Caco-2 (cell line): ENCODE measurements at regions of chr7 and their contacts with region 1.

Region 1: GRCh38 chr7:82234457-82235049 is 209.0 kb downstream of the CACNA2D1 start:
- DNase-seq: peak in 1 of 2 experiments; percentile 32
- H3K4me3 ChIP-seq: no peak overlapping the region
- H3K4me3 Mint-ChIP-seq: no peak overlapping the region
- H3K27ac Mint-ChIP-seq: no peak overlapping the region
- H3K4me1 ChIP-seq: no peaks in the 10 kb centered on the region
- H3K4me1 Mint-ChIP-seq: no peaks in the 10 kb centered on the region
- H3K27me3 ChIP-seq: no peaks in the 10 kb centered on the region
- H3K27me3 Mint-ChIP-seq: peaks cover 11% of the 10 kb centered on the region
- CTCF ChIP-seq: peak; percentile 60 to 61

Region 2: GRCh38 chr7:82044497-82045080 is 190.0 kb before region 1 on chr7:
- CTCF ChIA-PET with region 1: no interaction called
- POLR2A ChIA-PET with region 1: no interaction called
- intact Hi-C with region 1: loop called (anchors 5 kb)
- DNase-seq: peak in 1 of 2 experiments; percentile 42
- H3K4me3 ChIP-seq: no peak overlapping the region
- H3K4me3 Mint-ChIP-seq: no peak overlapping the region
- H3K27ac Mint-ChIP-seq: no peak overlapping the region
- H3K4me1 ChIP-seq: peaks cover 4% of the 10 kb centered on the region
- H3K4me1 Mint-ChIP-seq: peaks cover 6% of the 10 kb centered on the region
- H3K27me3 ChIP-seq: no peaks in the 10 kb centered on the region
- H3K27me3 Mint-ChIP-seq: peaks cover 9% of the 10 kb centered on the region
- CTCF ChIP-seq: peak; percentile 45 to 74

Region 3: GRCh38 chr7:82359426-82359825 is 124.9 kb after region 1 on chr7:
- CTCF ChIA-PET with region 1: interaction called, 3 read pairs
- POLR2A ChIA-PET with region 1: no interaction called
- intact Hi-C with region 1: loop called (anchors 10 kb)
- DNase-seq: no peak
- H3K4me3 ChIP-seq: no peak overlapping the region
- H3K4me3 Mint-ChIP-seq: no peak overlapping the region
- H3K27ac Mint-ChIP-seq: no peak overlapping the region
- H3K4me1 ChIP-seq: no peaks in the 10 kb centered on the region
- H3K4me1 Mint-ChIP-seq: no peaks in the 10 kb centered on the region
- H3K27me3 ChIP-seq: no peaks in the 10 kb centered on the region
- H3K27me3 Mint-ChIP-seq: no peaks in the 10 kb centered on the region
- CTCF ChIP-seq: no peak

Region 4: GRCh38 chr7:82481499-82482097 is 247.0 kb after region 1 on chr7:
- CTCF ChIA-PET with region 1: no interaction called
- POLR2A ChIA-PET with region 1: no interaction called
- intact Hi-C with region 1: loop called (anchors 1 kb)
- DNase-seq: no peak
- H3K4me3 ChIP-seq: no peak overlapping the region
- H3K4me3 Mint-ChIP-seq: no peak overlapping the region
- H3K27ac Mint-ChIP-seq: no peak overlapping the region
- H3K4me1 ChIP-seq: no peaks in the 10 kb centered on the region
- H3K4me1 Mint-ChIP-seq: no peaks in the 10 kb centered on the region
- H3K27me3 ChIP-seq: no peaks in the 10 kb centered on the region
- H3K27me3 Mint-ChIP-seq: peaks cover 2% of the 10 kb centered on the region
- CTCF ChIP-seq: peak; percentile 63 to 81

Region 5: DNA sequence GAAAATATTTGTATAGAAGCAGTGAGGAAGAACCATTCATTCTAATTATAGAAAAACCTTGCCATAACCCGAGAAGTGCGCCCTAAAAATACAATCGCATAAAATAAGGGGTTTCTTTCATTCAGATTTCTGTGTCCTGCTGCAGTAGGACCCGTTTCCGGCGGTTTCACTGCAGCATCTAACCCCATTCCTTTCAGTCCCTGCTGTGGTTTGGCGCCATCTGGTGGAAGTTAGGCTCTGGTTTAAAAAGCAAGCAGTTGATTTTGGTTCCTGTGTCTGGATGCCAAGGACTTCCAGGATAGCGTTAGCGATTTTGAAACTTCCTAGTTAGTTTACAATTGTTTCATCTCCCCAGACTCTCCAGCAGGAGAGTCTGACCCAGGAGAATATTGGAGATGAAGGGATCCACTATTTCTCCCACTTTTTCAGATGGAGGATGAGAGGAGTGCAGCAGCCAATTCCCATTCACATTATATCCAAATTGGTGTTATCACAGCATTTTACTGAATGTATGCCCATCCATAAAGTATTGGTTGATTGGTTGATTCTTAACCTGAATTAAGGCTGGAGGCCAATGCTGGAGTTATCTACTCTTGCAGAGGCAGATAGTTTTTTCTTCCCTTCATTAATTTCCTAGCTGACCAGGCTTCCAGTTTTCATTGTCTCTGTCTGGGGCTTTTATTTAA is 337.8 kb after region 1 on chr7:
- CTCF ChIA-PET with region 1: no interaction called
- POLR2A ChIA-PET with region 1: no interaction called
- intact Hi-C with region 1: loop called (anchors 1 kb)
- DNase-seq: peak; percentile 80 to 83
- H3K4me3 ChIP-seq: no peak overlapping the region
- H3K4me3 Mint-ChIP-seq: no peak overlapping the region
- H3K27ac Mint-ChIP-seq: no peak overlapping the region
- H3K4me1 ChIP-seq: no peaks in the 10 kb centered on the region
- H3K4me1 Mint-ChIP-seq: no peaks in the 10 kb centered on the region
- H3K27me3 ChIP-seq: no peaks in the 10 kb centered on the region
- H3K27me3 Mint-ChIP-seq: peaks cover 17% of the 10 kb centered on the region
- CTCF ChIP-seq: peak; percentile 85 to 91

Region 6: GRCh38 chr7:82605247-82605872 is 370.8 kb after region 1 on chr7:
- CTCF ChIA-PET with region 1: interaction called, 6 read pairs
- POLR2A ChIA-PET with region 1: no interaction called
- intact Hi-C with region 1: loop called (anchors 2 kb)
- DNase-seq: peak in 1 of 2 experiments; percentile 10
- H3K4me3 ChIP-seq: no peak overlapping the region
- H3K4me3 Mint-ChIP-seq: no peak overlapping the region
- H3K27ac Mint-ChIP-seq: no peak overlapping the region
- H3K4me1 ChIP-seq: no peaks in the 10 kb centered on the region
- H3K4me1 Mint-ChIP-seq: no peaks in the 10 kb centered on the region
- H3K27me3 ChIP-seq: no peaks in the 10 kb centered on the region
- H3K27me3 Mint-ChIP-seq: no peaks in the 10 kb centered on the region
- CTCF ChIP-seq: peak; percentile 53 to 63

Region 7: GRCh38 chr7:82729172-82730030 is 494.8 kb after region 1 on chr7:
- CTCF ChIA-PET with region 1: no interaction called
- POLR2A ChIA-PET with region 1: no interaction called
- intact Hi-C with region 1: loop called (anchors 1 kb)
- DNase-seq: peak in 1 of 2 experiments; percentile 40
- H3K4me3 ChIP-seq: no peak overlapping the region
- H3K4me3 Mint-ChIP-seq: no peak overlapping the region
- H3K27ac Mint-ChIP-seq: no peak overlapping the region
- H3K4me1 ChIP-seq: no peaks in the 10 kb centered on the region
- H3K4me1 Mint-ChIP-seq: no peaks in the 10 kb centered on the region
- H3K27me3 ChIP-seq: no peaks in the 10 kb centered on the region
- H3K27me3 Mint-ChIP-seq: no peaks in the 10 kb centered on the region
- CTCF ChIP-seq: peak; percentile 70 to 77